ENCODE measurements at regions of chr7 and their contacts with region 1.

Region 1: GRCh38 chr7:150876817-150877526 is 24.7 kb downstream of the AOC1 start:
- DNase-seq: peak; percentile 64
- ATAC-seq: peak; percentile 78
- H3K4me3 ChIP-seq: no peak overlapping the region
- H3K27ac ChIP-seq: peak overlapping the region; percentile 77; the same call in 1 of the 2 replicates
- H3K4me1 ChIP-seq: peaks cover 6% of the 10 kb centered on the region; the same call in 1 of the 2 replicates
- H3K27me3 ChIP-seq: no peaks in the 10 kb centered on the region
- CTCF ChIP-seq: peak; percentile 55
- POLR2A ChIP-seq: no peak
- RAD21 ChIP-seq: peak; percentile 38

Region 2: DNA sequence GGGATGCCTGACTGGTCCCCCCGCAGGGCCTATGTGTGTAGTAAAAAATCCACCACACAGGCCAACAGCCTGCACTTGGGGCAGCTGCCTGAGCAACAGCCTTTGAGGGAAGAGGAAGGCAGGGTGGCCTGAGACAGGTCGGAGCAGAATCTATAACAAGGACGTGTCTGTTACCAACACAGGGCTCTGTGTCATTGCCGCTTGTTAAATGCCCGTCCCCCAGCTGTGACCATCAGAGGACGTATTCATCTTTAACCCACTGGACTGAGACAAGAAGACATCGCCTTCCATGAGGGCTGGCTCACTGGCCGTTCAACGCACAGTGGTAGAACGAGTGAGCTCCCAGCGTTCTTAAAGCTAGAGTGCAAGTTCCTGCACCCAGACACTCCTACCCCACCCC is 1856.5 kb before region 1 on chr7:
- CTCF ChIA-PET with region 1: no interaction called
- POLR2A ChIA-PET with region 1: interaction called, 14 read pairs
- dilution Hi-C with region 1: no loop called
- in situ Hi-C with region 1: no loop called
- intact Hi-C with region 1: no loop called
- DNase-seq: no peak
- ATAC-seq: no peak
- H3K4me3 ChIP-seq: no peak overlapping the region
- H3K27ac ChIP-seq: no peak overlapping the region
- H3K4me1 ChIP-seq: no peaks in the 10 kb centered on the region
- H3K27me3 ChIP-seq: no peaks in the 10 kb centered on the region
- CTCF ChIP-seq: no peak
- POLR2A ChIP-seq: no peak
- RAD21 ChIP-seq: no peak

Region 3: DNA sequence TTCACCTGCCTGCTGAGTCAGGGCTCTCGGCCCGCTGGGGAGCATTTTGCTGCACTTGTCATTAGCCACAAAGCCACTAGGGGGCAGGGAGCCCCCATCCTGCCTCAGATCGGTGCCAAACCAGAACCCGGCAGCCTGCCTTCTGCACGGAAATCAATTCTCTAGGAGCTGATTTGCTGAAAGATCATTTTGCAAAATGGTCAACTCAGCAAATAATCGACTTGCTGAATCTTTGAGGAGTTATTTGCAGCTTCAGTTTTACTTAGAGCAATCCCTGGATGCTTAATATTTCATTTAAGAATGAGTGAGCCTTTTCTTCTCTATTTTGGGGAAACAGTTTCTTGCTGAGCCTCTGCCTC is 428.2 kb before region 1 on chr7:
- CTCF ChIA-PET with region 1: interaction called, 5 read pairs
- POLR2A ChIA-PET with region 1: no interaction called
- dilution Hi-C with region 1: no loop called
- in situ Hi-C with region 1: no loop called
- intact Hi-C with region 1: loop called (anchors 1 kb)
- DNase-seq: peak; percentile 55
- ATAC-seq: peak; percentile 96
- H3K4me3 ChIP-seq: no peak overlapping the region
- H3K27ac ChIP-seq: no peak overlapping the region
- H3K4me1 ChIP-seq: no peaks in the 10 kb centered on the region
- H3K27me3 ChIP-seq: peaks cover 20% of the 10 kb centered on the region; the same call in 1 of the 2 replicates
- CTCF ChIP-seq: peak; percentile 80
- POLR2A ChIP-seq: no peak
- RAD21 ChIP-seq: peak; percentile 61

Region 4: GRCh38 chr7:150924369-150924781 is 47.4 kb after region 1 on chr7:
- CTCF ChIA-PET with region 1: no interaction called
- POLR2A ChIA-PET with region 1: no interaction called
- dilution Hi-C with region 1: no loop called
- in situ Hi-C with region 1: no loop called
- intact Hi-C with region 1: no loop called
- DNase-seq: no peak
- ATAC-seq: no peak
- H3K4me3 ChIP-seq: no peak overlapping the region
- H3K27ac ChIP-seq: no peak overlapping the region
- H3K4me1 ChIP-seq: peaks cover 2% of the 10 kb centered on the region; the same call in 1 of the 2 replicates
- H3K27me3 ChIP-seq: peaks cover 13% of the 10 kb centered on the region
- CTCF ChIP-seq: no peak
- POLR2A ChIP-seq: no peak
- RAD21 ChIP-seq: no peak

Measured in IMR-90 (cell line).